ENCODE measurements at regions of chr22 and their contacts with region 1.

Region 1: DNA sequence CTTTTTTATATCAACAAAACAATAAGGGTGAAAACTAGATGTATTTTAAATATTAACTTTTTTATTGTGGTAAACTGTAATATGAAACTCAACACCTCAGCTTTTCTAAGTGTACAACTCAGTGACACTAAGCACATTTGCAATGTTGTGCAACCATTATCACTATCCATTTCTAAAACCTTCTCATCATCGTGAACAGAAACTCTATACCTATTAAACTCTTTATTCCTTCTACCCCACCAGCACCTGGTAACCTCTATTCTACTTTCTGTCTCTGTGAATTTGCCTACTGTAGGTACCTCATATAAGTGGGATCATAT is 9.4 kb downstream of the HORMAD2 start:
- DNase-seq: no peak
- H3K4me3 Mint-ChIP-seq: no peak overlapping the region
- H3K27ac Mint-ChIP-seq: no peak overlapping the region
- H3K4me1 Mint-ChIP-seq: peaks cover 16% of the 10 kb centered on the region
- H3K27me3 Mint-ChIP-seq: peaks cover 15% of the 10 kb centered on the region

Region 2: GRCh38 chr22:29587938-29588699 is 501.5 kb before region 1 on chr22:
- CTCF ChIA-PET with region 1: interaction called, 18 read pairs
- DNase-seq: no peak
- H3K4me3 Mint-ChIP-seq: no peak overlapping the region
- H3K27ac Mint-ChIP-seq: no peak overlapping the region
- H3K4me1 Mint-ChIP-seq: peaks cover 10% of the 10 kb centered on the region
- H3K27me3 Mint-ChIP-seq: peaks cover 4% of the 10 kb centered on the region

Region 3: GRCh38 chr22:29635734-29636357 is 453.8 kb before region 1 on chr22:
- CTCF ChIA-PET with region 1: interaction called, 11 read pairs
- DNase-seq: no peak
- H3K4me3 Mint-ChIP-seq: no peak overlapping the region
- H3K27ac Mint-ChIP-seq: no peak overlapping the region
- H3K4me1 Mint-ChIP-seq: peaks cover 20% of the 10 kb centered on the region
- H3K27me3 Mint-ChIP-seq: no peaks in the 10 kb centered on the region

Region 4: GRCh38 chr22:29972121-29972520 is 117.5 kb before region 1 on chr22:
- CTCF ChIA-PET with region 1: no interaction called
- DNase-seq: no peak
- H3K4me3 Mint-ChIP-seq: no peak overlapping the region
- H3K27ac Mint-ChIP-seq: no peak overlapping the region
- H3K4me1 Mint-ChIP-seq: no peaks in the 10 kb centered on the region
- H3K27me3 Mint-ChIP-seq: no peaks in the 10 kb centered on the region

Region 5: DNA sequence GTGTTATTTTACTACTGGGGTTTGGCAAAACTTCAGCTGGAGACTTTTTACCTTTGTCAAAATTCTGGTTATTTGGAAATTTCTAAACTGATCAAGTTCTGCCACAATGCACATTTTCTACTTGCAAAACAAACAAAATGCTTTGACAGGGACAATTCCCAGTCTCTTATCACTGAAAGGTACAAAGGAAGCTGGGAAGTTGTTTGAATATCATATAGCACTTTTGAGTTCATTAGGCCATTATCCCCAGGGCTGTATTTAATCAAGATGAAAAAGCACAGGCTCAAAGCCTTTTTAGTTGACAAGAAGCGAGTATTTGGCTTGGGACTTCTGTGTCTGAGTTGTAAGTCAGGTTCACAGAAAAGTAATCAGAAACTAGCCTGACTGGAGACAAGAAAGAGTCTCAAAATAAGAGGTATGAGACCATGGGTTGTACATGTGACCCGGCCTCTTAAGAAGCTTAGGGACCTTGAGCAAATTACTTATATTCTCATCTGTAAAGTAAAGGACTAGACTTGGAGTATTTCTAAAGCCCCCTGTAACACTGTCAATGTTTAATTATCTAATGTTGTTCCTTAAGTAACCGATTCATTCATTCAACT is 12.2 kb before region 1 on chr22:
- CTCF ChIA-PET with region 1: interaction called, 11 read pairs
- DNase-seq: no peak
- H3K4me3 Mint-ChIP-seq: no peak overlapping the region
- H3K27ac Mint-ChIP-seq: no peak overlapping the region
- H3K4me1 Mint-ChIP-seq: peaks cover 11% of the 10 kb centered on the region
- H3K27me3 Mint-ChIP-seq: peaks cover 10% of the 10 kb centered on the region